ENCODE measurements at regions of chr17 and their contacts with region 1.

Region 1: GRCh38 chr17:63406689-63407330 is 39.3 kb downstream of the CYB561 start:
- DNase-seq: peak; percentile 90
- H3K4me3 Mint-ChIP-seq: no peak overlapping the region
- H3K27ac Mint-ChIP-seq: no peak overlapping the region
- H3K4me1 Mint-ChIP-seq: peaks cover 5% of the 10 kb centered on the region
- H3K27me3 Mint-ChIP-seq: no peaks in the 10 kb centered on the region
- CTCF ChIP-seq: peak; percentile 78

Region 2: DNA sequence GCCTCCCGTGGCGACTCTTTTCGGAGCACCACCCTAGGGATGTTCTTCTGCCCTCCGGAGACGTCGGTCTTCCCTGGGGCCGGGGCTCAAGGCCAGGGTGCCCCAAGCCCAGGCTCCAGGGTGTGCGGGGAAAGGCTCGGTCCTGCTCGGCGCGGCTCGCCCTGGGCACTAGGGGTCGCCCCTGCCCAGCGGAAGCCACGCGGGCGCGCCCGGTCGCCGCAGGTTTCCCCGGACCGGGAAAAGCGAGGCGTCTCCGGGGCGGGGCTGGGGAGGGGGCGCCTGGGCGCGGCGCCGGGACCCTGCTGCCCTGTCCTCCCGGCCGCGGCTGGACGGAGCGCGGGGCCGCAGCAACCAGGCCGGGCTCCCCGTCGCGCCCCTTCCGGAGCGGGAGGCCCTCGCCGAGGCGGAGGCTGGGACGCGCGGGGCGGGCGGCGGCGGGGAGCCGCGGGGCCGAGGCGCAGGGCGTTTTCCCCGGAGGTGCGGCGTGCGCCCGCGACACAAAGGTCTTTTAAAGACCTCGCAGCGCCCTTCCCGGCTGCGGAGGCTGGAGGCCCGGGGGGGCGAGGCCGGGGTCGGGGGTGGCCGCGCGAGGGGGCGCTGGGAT is 702.9 kb before region 1 on chr17:
- CTCF ChIA-PET with region 1: interaction called, 10 read pairs
- POLR2A ChIA-PET with region 1: interaction called, 4 read pairs
- intact Hi-C with region 1: loop called (anchors 1 kb)
- DNase-seq: peak; percentile 75
- H3K4me3 Mint-ChIP-seq: peak overlapping the region; percentile 74
- H3K27ac Mint-ChIP-seq: peak overlapping the region; percentile 15
- H3K4me1 Mint-ChIP-seq: peaks cover 7% of the 10 kb centered on the region
- H3K27me3 Mint-ChIP-seq: no peaks in the 10 kb centered on the region
- CTCF ChIP-seq: peak; percentile 88

Region 3: DNA sequence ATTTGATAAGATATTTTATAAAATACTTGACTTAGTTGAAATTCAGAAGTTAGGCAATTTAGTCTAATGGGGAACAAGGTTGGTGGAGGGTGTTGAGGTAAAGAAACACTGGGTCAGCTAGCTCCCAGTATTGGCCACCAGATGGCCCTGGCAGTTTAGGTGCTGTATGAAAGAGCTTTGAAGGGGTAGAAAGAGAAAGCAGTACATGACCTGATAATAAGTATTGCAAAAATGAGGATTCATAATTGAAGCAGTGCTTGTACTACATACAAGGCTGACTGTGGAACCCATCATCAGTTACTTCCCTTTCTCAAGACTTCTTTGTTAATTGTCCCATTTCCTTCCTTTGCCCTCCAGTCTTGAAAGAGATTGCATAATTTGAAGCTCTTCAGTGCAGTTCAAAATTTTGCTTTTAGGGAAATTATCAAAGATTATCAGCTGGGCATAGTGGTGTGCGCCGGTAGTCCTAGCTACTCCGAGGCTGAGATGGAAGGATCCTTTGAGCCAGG is 411.4 kb before region 1 on chr17:
- CTCF ChIA-PET with region 1: interaction called, 16 read pairs
- POLR2A ChIA-PET with region 1: no interaction called
- intact Hi-C with region 1: loop called (anchors 1 kb)
- DNase-seq: peak; percentile 47
- H3K4me3 Mint-ChIP-seq: no peak overlapping the region
- H3K27ac Mint-ChIP-seq: peak overlapping the region; percentile 46
- H3K4me1 Mint-ChIP-seq: peaks cover 27% of the 10 kb centered on the region
- H3K27me3 Mint-ChIP-seq: no peaks in the 10 kb centered on the region
- CTCF ChIP-seq: peak; percentile 41

Region 4: DNA sequence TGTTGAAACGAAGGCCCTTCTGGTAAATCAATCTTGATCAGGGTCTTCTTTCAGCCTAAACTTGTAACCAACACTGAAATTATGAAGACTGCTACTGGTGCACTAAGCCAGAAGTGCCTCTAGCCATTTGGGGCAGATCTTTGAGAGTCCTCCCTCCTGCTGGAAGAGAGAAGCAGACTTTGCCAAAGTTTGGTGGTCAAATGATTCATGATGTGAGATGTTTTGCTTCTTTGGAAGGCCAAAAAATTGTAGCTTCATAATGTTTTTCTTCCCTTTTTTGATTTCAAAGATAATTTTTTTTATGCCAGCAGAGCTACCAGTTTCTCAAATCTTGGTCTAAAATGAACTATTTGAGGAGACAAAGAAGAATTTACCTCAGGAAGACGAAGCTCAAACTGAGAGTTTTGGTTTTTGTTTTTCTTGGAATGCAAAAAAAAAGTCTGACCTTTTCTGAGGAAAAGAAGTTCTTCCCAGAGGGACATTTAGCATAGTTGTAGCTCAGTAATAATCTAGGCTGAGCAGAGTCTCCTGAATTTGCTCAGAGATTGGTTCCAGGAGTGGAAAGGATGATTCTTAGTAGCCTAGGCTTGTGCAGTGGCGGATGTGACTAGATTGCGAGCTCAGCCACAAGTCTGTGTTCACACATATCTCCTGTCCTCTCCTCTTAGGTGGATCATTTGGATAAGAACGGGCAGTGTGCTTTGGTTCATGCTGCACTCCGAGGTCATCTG is 11.6 kb before region 1 on chr17:
- CTCF ChIA-PET with region 1: interaction called, 18 read pairs
- POLR2A ChIA-PET with region 1: no interaction called
- intact Hi-C with region 1: no loop called
- DNase-seq: peak; percentile 5
- H3K4me3 Mint-ChIP-seq: no peak overlapping the region
- H3K27ac Mint-ChIP-seq: peak overlapping the region; percentile 40
- H3K4me1 Mint-ChIP-seq: no peaks in the 10 kb centered on the region
- H3K27me3 Mint-ChIP-seq: no peaks in the 10 kb centered on the region
- CTCF ChIP-seq: no peak